Breast epithelium (tissue), 4 donors: ENCODE measurements at regions of chr5 and their contacts with region 1.

Region 1: DNA sequence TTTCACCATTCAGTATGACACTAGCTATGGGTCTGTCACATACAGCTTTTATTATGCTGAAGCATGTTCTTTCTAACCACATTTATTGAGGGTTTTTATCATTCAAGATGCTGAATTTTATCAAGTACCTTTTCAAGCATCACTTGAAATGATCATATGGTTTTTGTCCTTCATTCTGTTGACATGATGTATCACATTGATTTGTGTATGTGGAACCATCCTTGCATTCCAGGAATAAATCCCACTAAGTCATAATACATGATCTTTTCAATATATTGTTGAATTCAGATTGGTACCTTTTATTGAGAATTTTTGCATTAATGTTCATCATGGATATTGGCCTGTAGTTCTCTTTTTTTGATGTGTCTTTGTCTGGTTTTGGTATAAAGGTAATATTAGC is 317.4 kb downstream of the NNT start:
- DNase-seq: no peak
- H3K4me3 ChIP-seq: no peak overlapping the region
- H3K27ac ChIP-seq: no peak overlapping the region
- H3K4me1 ChIP-seq: no peaks in the 10 kb centered on the region
- H3K27me3 ChIP-seq: no peaks in the 10 kb centered on the region
- CTCF ChIP-seq: no peak
- POLR2A ChIP-seq: no peak

Region 2: GRCh38 chr5:43389679-43390329 is 530.6 kb before region 1 on chr5:
- intact Hi-C with region 1: loop called (anchors 5 kb)
- DNase-seq: no peak
- H3K4me3 ChIP-seq: no peak overlapping the region
- H3K27ac ChIP-seq: peak overlapping the region; percentile 5 to 26
- H3K4me1 ChIP-seq: no peaks in the 10 kb centered on the region
- H3K27me3 ChIP-seq: no peaks in the 10 kb centered on the region
- CTCF ChIP-seq: peak; percentile 57 to 62 (median 61)
- POLR2A ChIP-seq: no peak